ENCODE measurements at regions of chr19 and their contacts with region 1.

Region 1: DNA sequence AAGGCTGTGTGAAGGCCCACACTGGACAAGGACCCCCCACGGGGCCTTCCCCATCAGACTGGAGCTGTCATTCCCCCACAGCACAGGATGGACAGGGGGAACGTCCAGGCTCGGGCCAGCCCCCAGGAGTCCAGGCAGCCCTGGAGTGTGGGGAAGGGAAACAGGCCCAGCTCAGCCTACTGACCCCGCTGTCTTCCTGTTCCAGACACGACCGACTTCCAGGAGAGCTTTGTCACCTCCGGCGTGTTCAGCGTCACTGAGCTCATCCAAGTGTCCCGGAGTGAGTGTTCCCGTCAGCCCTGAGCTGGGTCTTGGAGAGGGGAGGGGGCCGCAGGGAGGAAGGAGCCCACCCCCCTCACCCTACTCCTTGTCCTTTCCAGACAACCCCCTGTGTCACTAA is 47.0 kb downstream of the SMIM24 start:
- DNase-seq: no peak
- ATAC-seq: no peak
- H3K4me3 ChIP-seq: no peak overlapping the region
- H3K27ac ChIP-seq: no peak overlapping the region
- H3K4me1 ChIP-seq: peaks cover 5% of the 10 kb centered on the region
- H3K27me3 ChIP-seq: no peaks in the 10 kb centered on the region
- CTCF ChIP-seq: no peak

Region 2: DNA sequence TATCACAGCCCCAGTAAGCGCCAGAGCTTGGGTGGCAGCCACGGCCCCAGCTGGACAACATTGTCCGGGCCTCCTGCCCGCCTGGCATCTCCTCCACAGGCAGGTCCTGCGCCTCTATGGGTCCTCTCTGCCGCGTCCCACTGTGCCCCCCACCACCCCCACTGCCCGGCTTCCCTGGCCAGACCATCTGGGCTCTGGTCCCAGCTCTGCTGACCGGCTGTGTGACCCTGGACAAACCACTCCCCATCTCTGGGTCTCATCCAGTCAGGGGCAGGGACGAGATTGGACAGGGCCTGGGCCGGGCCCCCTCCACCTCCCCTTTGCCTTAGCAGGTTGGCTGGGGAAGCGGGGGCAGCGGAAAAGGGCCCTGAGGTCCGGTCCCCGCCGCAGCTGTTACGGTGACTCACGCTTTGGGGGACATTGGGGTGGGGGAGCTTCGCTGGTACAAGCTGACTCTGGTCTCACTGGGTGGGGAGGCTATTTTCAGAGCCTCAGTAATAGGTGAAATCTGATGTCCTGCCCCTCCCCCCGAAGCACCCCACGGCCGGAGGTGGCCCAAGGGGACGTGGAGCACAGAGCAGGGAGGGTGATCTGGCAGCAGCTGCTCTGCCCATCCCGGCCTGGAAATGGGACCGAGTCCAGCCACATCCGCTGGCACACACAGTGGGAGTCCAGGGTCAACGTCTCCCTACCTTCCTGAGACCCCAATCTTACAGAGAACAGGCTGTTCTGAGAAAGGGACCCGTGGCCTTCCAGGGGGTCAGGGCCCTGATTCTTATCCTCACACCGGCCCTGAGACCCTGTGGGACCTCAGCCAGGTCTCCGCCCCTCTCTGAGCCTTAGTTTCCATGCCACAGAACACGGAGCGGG is 57.9 kb before region 1 on chr19:
- CTCF ChIA-PET with region 1: no interaction called
- POLR2A ChIA-PET with region 1: interaction called, 14 read pairs
- in situ Hi-C with region 1: no loop called
- intact Hi-C with region 1: no loop called
- DNase-seq: no peak
- ATAC-seq: peak; percentile 82
- H3K4me3 ChIP-seq: peak overlapping the region in 1 of 2 experiments; percentile 23; a peak in 2 of 4 replicates
- H3K27ac ChIP-seq: peak overlapping the region; percentile 95
- H3K4me1 ChIP-seq: peaks cover 51% of the 10 kb centered on the region
- H3K27me3 ChIP-seq: no peaks in the 10 kb centered on the region
- CTCF ChIP-seq: no peak

Region 3: DNA sequence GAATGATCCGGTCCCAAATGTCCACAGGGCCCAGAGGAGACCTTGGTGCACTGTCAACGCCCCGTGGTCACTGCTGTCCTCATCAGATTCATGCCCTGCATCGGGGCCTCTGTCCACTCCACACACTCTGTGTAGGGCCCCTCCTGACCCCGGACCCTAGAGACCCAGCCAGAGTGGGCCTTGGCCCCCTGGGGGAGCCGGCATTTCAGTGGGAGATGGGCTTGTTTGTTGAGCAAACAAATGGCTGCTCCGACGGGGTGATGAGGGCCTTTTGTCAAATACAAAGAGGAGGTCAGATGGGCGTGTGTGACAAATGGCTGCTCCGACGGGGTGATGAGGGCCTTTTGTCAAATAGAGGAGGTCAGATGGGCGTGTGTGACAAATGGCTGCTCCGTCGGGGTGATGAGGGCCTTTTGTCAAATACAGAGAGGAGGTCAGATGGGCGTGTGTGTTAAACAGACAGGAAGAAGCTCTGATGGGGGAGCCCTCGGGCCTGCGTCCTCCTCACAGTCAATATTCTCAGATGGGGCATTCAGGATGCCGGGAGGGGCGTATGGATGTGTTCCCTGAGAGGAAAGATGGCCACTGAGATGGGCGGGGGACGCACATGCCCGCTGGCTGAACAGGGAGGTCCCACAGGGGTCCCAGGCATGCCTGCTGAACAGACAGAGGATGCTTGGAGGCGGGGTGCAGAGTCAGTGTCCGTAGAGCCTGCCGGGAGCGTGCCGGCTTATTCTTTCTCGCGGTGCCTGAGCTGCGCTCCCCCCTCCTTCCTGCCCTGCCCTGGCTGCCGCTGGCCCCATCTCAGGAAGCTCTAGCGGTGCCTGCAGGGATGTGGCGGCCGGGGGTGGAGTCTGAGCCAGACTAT is 10.7 kb after region 1 on chr19:
- CTCF ChIA-PET with region 1: no interaction called
- POLR2A ChIA-PET with region 1: no interaction called
- in situ Hi-C with region 1: no loop called
- intact Hi-C with region 1: no loop called
- DNase-seq: no peak
- ATAC-seq: no peak
- H3K4me3 ChIP-seq: no peak overlapping the region
- H3K27ac ChIP-seq: no peak overlapping the region
- H3K4me1 ChIP-seq: no peaks in the 10 kb centered on the region
- H3K27me3 ChIP-seq: no peaks in the 10 kb centered on the region
- CTCF ChIP-seq: no peak